ENCODE measurements at regions of chr6 and their contacts with region 1.

Region 1: GRCh38 chr6:148530394-148530953 is 187.8 kb downstream of the SASH1 start:
- DNase-seq: no peak
- H3K4me3 Mint-ChIP-seq: no peak overlapping the region
- H3K27ac Mint-ChIP-seq: no peak overlapping the region
- H3K4me1 Mint-ChIP-seq: peaks cover under 1% of the 10 kb centered on the region
- H3K27me3 Mint-ChIP-seq: peaks cover 2% of the 10 kb centered on the region

Region 2: DNA sequence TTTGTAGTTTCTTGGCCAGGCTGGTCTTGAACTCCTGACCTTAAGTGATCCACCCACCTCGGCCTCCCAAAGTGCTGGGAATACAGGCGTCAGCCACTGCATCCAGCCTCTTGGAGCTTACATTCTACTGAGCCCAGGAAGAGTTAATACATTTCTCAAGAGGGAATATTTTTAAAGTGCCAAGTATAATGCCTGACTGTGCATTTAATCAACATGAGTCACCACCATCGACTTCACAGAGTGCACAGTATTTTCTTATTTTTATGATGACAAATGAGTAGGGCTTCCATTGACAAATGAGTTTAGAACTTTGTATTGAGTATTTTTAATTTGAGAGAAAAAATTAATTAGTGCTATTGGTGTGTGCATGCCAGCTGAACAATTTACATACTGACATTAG is 115.6 kb before region 1 on chr6:
- CTCF ChIA-PET with region 1: no interaction called
- POLR2A ChIA-PET with region 1: no interaction called
- DNase-seq: no peak
- H3K4me3 Mint-ChIP-seq: no peak overlapping the region
- H3K27ac Mint-ChIP-seq: no peak overlapping the region
- H3K4me1 Mint-ChIP-seq: no peaks in the 10 kb centered on the region
- H3K27me3 Mint-ChIP-seq: peaks cover 14% of the 10 kb centered on the region

Region 3: GRCh38 chr6:148514091-148514845 is 16.2 kb before region 1 on chr6:
- CTCF ChIA-PET with region 1: interaction called, 5 read pairs
- POLR2A ChIA-PET with region 1: interaction called, 12 read pairs
- DNase-seq: no peak
- H3K4me3 Mint-ChIP-seq: no peak overlapping the region
- H3K27ac Mint-ChIP-seq: no peak overlapping the region
- H3K4me1 Mint-ChIP-seq: no peaks in the 10 kb centered on the region
- H3K27me3 Mint-ChIP-seq: peaks cover 20% of the 10 kb centered on the region

Region 4: DNA sequence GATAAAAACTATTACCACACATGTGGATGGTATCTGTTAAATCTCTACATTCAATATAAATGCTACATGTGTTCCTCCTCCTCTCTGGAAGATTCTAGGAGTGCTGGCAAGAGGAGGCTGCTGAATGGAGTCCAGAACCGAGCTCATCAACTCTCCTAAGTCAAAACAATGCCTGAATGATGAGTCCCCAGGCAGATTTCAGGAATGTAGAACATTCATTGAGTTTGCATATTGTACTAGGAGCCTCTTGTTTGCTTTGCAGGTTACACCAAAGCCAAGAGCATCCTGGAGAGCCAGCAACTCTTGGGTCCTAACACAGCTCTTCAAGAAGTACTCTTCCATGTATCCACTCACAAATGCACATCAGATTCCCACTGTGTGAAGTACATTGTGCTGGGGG is 98.7 kb after region 1 on chr6:
- CTCF ChIA-PET with region 1: no interaction called
- POLR2A ChIA-PET with region 1: no interaction called
- DNase-seq: no peak
- H3K4me3 Mint-ChIP-seq: no peak overlapping the region
- H3K27ac Mint-ChIP-seq: no peak overlapping the region
- H3K4me1 Mint-ChIP-seq: no peaks in the 10 kb centered on the region
- H3K27me3 Mint-ChIP-seq: peaks cover 3% of the 10 kb centered on the region

Region 5: GRCh38 chr6:150267686-150268561 is 1737.5 kb after region 1 on chr6:
- CTCF ChIA-PET with region 1: no interaction called
- POLR2A ChIA-PET with region 1: no interaction called
- DNase-seq: no peak
- H3K4me3 Mint-ChIP-seq: no peak overlapping the region
- H3K27ac Mint-ChIP-seq: no peak overlapping the region
- H3K4me1 Mint-ChIP-seq: no peaks in the 10 kb centered on the region
- H3K27me3 Mint-ChIP-seq: peaks cover 3% of the 10 kb centered on the region

Measured in activated CD4-positive, alpha-beta T cell treated with anti-CD3 and anti-CD28 coated beads, Interleukin-2, amount 10 ng/mL, durations not matched to agents 7 days and 5 days (primary cell).